ENCODE measurements at regions of chr11 and their contacts with region 1.

Region 1: DNA sequence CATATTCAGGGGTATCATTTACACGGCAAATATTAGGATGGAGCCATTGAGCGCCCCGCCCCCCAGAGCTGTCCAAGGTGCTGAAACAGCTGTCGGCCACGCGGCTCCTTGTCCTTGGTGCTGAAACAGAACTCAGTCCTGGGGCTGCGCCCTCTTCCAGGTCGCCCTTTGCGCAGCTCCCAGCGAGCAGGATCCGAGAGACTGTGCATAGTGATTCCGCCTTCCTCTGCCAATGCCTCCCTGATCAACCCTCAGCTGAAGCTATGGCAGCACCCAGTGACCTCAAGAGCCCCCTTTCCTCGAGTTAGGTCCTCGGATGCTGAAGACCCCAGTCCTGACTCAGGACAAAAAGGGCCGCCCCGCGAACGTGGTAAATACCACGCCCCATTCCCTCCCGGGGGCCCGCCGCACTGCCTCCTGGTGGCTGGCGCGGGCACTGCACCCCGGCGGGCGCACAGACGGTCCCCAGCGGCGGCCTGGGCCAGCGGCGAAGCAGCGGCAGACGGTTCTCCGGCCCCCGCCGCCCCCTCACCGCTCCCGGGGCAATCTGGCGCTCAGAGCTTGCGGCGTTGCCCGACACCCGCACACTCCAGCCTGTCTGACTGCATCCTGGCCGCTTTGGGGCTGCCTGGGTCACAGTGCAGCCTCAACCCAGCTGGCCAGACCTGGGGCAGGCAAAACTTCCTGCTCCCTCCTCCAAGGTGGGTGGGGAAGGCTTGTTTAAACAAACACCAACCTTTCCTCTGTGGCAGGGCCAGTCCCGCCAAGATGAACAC is 13.4 kb downstream of the SYT7 start:
- DNase-seq: peak; percentile 58 to 98
- H3K4me3 ChIP-seq: peak overlapping the region; percentile 16 to 54 (median 39); a peak in 6 of 8 replicates
- H3K27ac ChIP-seq: no peak overlapping the region
- H3K4me1 ChIP-seq: peaks cover 0 to 14% (median 5%) of the 10 kb centered on the region in 4 experiments; a peak in 5 of 7 replicates
- H3K27me3 ChIP-seq: peaks cover 0 to 10% (median 4%) of the 10 kb centered on the region in 4 experiments; a peak in 3 of 7 replicates
- CTCF ChIP-seq: peak; percentile 95 to 98 (median 96)
- EP300 ChIP-seq: no peak
- POLR2A ChIP-seq: no peak
- RAD21 ChIP-seq: peak; percentile 40 to 63; a peak in 3 of 4 replicates

Region 2: DNA sequence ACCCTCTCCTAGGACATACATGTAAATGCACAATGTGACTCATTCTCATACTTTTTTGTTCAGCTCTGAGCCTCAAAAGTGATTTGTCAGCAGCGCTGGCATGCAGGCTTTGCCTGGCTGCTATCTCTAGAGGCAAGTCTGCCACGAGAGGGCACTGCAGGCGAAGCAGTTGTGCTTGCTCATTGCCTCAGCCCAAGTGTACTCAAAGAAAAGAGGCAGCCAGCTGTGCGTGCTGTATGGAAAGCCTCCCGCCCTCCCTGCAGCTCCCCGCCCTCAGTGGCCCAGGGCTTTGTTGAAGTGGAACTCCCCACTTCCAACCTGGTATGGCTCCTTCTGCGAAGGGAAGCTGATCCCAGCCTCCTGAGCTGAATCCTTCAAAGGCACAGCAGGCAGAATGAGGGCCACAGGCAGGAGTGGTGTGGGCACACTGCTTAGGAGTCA is 121.2 kb before region 1 on chr11:
- CTCF ChIA-PET with region 1: interaction called, 24 read pairs
- POLR2A ChIA-PET with region 1: no interaction called
- DNase-seq: peak; percentile 69 to 88
- H3K4me3 ChIP-seq: no peak overlapping the region
- H3K27ac ChIP-seq: no peak overlapping the region
- H3K4me1 ChIP-seq: peaks cover 0 to 3% (median under 1%) of the 10 kb centered on the region in 4 experiments; a peak in 2 of 7 replicates
- H3K27me3 ChIP-seq: no peaks in the 10 kb centered on the region
- CTCF ChIP-seq: peak; percentile 78 to 97 (median 92)
- EP300 ChIP-seq: no peak
- POLR2A ChIP-seq: no peak
- RAD21 ChIP-seq: peak; percentile 83 to 85

Region 3: DNA sequence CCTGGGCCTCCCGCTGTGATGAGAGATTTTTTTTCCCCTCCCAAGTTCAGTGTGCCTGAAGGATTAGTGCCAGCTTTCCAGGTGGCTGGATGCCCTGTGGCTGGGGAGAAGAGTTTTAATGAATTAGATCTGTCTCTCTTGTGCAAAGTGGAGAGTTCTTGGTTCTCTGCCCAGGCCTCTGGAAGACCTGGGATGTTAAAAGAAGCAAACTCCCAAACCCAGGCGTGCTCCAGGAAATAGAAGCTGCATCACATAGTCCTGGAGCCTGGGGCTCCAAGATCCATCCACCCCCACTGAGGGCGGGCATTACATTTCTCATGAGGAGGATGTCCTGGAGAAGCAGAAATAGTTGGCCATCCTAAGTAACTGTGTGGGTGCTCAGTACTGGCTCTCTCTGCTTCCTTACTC is 107.0 kb before region 1 on chr11:
- CTCF ChIA-PET with region 1: no interaction called
- POLR2A ChIA-PET with region 1: no interaction called
- DNase-seq: no peak
- H3K4me3 ChIP-seq: no peak overlapping the region
- H3K27ac ChIP-seq: no peak overlapping the region
- H3K4me1 ChIP-seq: no peaks in the 10 kb centered on the region
- H3K27me3 ChIP-seq: no peaks in the 10 kb centered on the region
- CTCF ChIP-seq: no peak
- EP300 ChIP-seq: no peak
- POLR2A ChIP-seq: no peak
- RAD21 ChIP-seq: no peak

Region 4: DNA sequence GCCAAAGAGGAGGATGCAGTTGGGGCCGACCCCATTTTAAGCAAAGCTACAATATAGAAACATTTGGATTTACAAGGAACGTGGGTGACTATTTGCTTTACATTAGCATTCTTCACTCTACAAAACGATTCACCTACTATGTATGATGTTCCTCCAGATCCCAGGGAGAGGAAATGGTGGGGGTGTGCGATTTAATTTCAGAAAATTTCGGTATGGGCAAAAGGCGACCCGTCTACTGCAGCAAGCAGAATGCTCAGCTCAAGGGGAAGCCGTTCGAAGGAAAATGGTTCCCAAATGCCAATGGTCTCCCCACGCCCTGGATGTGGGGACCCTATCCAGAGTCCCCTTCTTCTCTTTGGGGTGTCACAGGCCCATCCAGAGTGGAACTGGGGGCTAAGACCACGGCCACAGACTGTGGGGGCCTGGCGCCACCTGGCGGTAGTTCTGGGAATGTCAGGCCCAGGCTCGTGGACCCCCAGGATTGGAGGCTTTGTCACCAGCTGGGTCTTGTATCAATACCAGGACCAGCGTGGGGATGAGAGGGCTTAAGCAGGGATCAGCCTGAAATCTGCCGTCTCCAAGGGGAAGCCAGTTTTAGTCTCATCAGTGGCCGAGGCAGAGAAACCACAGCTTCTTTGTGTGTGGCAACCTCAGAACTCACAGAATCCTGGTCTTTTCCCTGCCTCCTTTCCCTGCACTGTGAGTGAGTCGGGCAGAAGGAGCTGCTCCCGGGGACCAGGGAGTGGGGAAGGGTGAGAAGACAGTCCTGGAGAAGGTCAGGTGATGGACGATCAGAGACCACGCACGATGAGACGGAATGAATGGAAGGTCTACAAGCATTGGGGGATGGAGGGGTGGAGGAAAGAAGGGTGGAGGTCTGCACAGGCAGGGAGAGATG is 50.5 kb before region 1 on chr11:
- CTCF ChIA-PET with region 1: interaction called, 109 read pairs
- POLR2A ChIA-PET with region 1: no interaction called
- DNase-seq: peak in 1 of 2 experiments; percentile 96
- H3K4me3 ChIP-seq: peak overlapping the region in 1 of 4 experiments; percentile 39; a peak in 1 of 8 replicates
- H3K27ac ChIP-seq: no peak overlapping the region
- H3K4me1 ChIP-seq: peaks cover 0 to 41% (median 27%) of the 10 kb centered on the region in 4 experiments; a peak in 6 of 7 replicates
- H3K27me3 ChIP-seq: no peaks in the 10 kb centered on the region; a peak in 2 of 7 replicates
- CTCF ChIP-seq: peak in 2 of 3 experiments; percentile 98; a peak in 3 of 4 replicates
- EP300 ChIP-seq: no peak
- POLR2A ChIP-seq: no peak
- RAD21 ChIP-seq: peak; percentile 98 to 99

Region 5: GRCh38 chr11:61541598-61541997 is 25.9 kb before region 1 on chr11:
- CTCF ChIA-PET with region 1: interaction called, 330 read pairs
- POLR2A ChIA-PET with region 1: interaction called, 4 read pairs
- DNase-seq: no peak
- H3K4me3 ChIP-seq: no peak overlapping the region
- H3K27ac ChIP-seq: no peak overlapping the region
- H3K4me1 ChIP-seq: peaks cover 5 to 35% (median 18%) of the 10 kb centered on the region in 4 experiments
- H3K27me3 ChIP-seq: no peaks in the 10 kb centered on the region; a peak in 1 of 7 replicates
- CTCF ChIP-seq: no peak
- EP300 ChIP-seq: no peak
- POLR2A ChIP-seq: no peak
- RAD21 ChIP-seq: no peak

Region 6: DNA sequence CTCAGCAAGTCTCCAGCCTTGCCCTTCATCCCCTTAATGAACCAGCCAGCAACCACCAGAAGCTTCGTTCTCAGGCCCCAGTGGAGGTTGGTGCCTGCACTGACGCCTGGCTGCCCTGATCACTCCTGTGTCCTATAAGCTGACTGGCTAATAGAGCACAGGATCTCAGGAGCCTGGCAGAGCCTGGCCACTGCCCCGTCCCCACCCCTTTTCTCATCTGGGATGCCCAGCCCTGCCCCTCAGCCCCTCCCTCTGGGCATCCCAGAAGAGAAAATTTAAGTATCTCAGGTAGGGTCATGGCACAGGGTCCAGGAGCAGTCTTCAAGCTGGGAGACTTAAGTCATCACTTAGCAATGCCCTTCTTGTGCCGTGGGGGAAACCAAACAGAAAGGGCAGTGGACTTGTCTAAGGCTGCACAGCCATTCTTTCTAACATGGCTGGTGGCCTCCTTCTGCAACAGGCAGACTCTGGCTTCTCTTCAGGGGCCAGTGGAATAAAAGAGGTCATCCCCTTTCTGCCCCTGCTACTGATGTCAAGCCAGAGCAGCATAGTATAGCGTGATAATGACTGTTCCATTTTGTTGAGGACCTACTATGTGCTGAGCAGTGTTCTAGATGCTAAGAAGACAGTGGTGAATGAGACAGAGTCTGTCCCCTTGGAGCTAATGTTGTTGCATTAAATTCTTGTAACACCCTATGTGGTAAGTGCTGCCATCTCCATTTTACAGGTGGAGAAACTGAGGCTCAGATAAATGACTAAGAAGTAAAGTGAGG is 28.9 kb after region 1 on chr11:
- CTCF ChIA-PET with region 1: interaction called, 29 read pairs
- POLR2A ChIA-PET with region 1: no interaction called
- DNase-seq: no peak
- H3K4me3 ChIP-seq: no peak overlapping the region
- H3K27ac ChIP-seq: no peak overlapping the region
- H3K4me1 ChIP-seq: peaks cover 5 to 33% (median 24%) of the 10 kb centered on the region in 4 experiments
- H3K27me3 ChIP-seq: no peaks in the 10 kb centered on the region; a peak in 2 of 7 replicates
- CTCF ChIP-seq: no peak
- EP300 ChIP-seq: no peak
- POLR2A ChIP-seq: no peak
- RAD21 ChIP-seq: no peak

Region 7: DNA sequence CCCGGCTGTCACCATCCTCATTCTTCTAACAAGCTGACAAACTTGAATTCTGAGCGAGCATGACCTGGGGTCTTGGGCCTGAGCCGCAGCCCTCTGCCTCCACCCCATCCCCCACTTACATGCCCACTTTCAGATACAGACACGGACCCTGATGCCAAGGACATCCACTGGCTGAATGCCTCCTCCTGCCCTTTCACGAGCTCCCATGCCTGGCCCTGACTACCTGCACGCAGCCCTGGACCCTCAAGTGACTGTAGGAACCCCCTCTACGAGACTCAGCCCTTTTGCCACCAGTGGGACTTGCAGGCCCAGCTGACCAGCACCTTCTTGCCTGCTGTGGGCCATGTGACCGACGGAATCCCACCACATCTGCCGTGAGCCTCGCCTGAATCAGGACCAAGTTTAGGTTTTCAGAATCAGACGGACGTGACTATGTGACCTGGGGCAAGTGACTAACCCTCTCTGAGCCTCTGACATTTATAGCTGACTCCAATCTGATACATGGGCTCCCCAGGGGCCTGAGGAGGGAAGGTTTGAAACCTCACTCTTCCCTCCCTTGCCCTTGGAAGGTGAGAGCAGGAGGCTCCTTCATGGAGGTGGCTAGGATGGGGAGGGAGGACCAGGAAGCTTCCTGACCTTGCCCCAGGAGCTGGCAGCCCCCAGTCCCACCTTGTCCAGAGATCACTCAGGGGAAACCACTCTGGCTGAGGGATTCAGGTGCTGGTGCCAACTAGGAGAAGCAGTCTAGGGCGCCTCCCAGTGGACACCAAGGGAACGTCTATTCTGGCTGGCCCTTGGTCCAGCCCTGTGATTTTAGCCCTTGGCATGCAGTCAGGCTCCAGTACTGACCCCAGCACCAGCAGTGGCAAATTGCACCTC is 60.3 kb after region 1 on chr11:
- CTCF ChIA-PET with region 1: interaction called, 82 read pairs
- POLR2A ChIA-PET with region 1: interaction called, 3 read pairs
- DNase-seq: peak in 1 of 2 experiments; percentile 92
- H3K4me3 ChIP-seq: no peak overlapping the region
- H3K27ac ChIP-seq: peak overlapping the region; percentile 76; the same call in 1 of the 2 replicates
- H3K4me1 ChIP-seq: peaks cover 6 to 25% (median 18%) of the 10 kb centered on the region in 4 experiments
- H3K27me3 ChIP-seq: no peaks in the 10 kb centered on the region
- CTCF ChIP-seq: peak; percentile 89 to 99 (median 97)
- EP300 ChIP-seq: no peak
- POLR2A ChIP-seq: no peak
- RAD21 ChIP-seq: peak; percentile 94 to 97